Caco-2 (cell line): ENCODE measurements at regions of chr1 and their contacts with region 1.

Region 1: DNA sequence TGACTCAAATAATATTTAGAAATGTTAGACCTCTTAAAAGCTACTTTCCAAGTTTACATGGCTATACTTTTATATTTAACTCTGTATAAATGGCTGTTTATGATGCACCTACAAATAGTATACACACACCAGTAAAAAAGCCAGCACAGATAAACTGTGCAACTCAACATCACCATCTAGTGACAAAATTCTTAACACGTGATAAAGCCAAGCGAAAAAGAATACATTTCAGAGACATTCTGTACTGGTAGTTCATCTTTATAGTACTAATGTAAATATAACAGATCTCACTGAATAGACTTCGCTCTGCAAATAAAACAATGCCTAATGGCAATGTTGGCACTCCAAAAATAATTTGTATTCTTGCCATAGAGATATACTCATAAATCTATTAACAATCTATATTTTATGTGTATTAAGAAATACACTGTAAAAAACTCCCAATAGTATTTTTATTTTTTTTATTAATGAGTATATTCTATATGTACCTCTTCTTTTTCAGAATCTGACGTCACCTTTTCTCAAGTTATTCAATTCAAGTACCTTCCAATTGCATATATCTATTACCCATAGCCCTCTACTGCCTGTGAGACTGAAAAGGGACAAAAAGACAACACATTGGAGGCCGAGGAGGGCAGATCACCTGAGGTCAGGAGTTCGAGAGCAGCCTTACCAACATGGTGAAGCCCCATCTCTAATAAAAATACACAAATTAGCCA is 100.2 kb downstream of the DPYD start:
- DNase-seq: peak in 1 of 2 experiments; percentile 30
- H3K4me3 ChIP-seq: no peak overlapping the region
- H3K4me3 Mint-ChIP-seq: no peak overlapping the region
- H3K27ac Mint-ChIP-seq: no peak overlapping the region
- H3K4me1 ChIP-seq: peaks cover 20% of the 10 kb centered on the region
- H3K4me1 Mint-ChIP-seq: peaks cover 2% of the 10 kb centered on the region
- H3K27me3 ChIP-seq: no peaks in the 10 kb centered on the region
- H3K27me3 Mint-ChIP-seq: no peaks in the 10 kb centered on the region
- CTCF ChIP-seq: peak in 1 of 2 experiments; percentile 28

Region 2: GRCh38 chr1:97186404-97186803 is 634.2 kb before region 1 on chr1:
- CTCF ChIA-PET with region 1: no interaction called
- POLR2A ChIA-PET with region 1: no interaction called
- intact Hi-C with region 1: loop called (anchors 2 kb)
- DNase-seq: peak in 1 of 2 experiments; percentile 2
- H3K4me3 ChIP-seq: no peak overlapping the region
- H3K4me3 Mint-ChIP-seq: no peak overlapping the region
- H3K27ac Mint-ChIP-seq: no peak overlapping the region
- H3K4me1 ChIP-seq: no peaks in the 10 kb centered on the region
- H3K4me1 Mint-ChIP-seq: no peaks in the 10 kb centered on the region
- H3K27me3 ChIP-seq: no peaks in the 10 kb centered on the region
- H3K27me3 Mint-ChIP-seq: no peaks in the 10 kb centered on the region
- CTCF ChIP-seq: no peak

Region 3: GRCh38 chr1:97243973-97244560 is 576.6 kb before region 1 on chr1:
- CTCF ChIA-PET with region 1: no interaction called
- POLR2A ChIA-PET with region 1: no interaction called
- intact Hi-C with region 1: loop called (anchors 10 kb)
- DNase-seq: no peak
- H3K4me3 ChIP-seq: no peak overlapping the region
- H3K4me3 Mint-ChIP-seq: no peak overlapping the region
- H3K27ac Mint-ChIP-seq: no peak overlapping the region
- H3K4me1 ChIP-seq: no peaks in the 10 kb centered on the region
- H3K4me1 Mint-ChIP-seq: no peaks in the 10 kb centered on the region
- H3K27me3 ChIP-seq: no peaks in the 10 kb centered on the region
- H3K27me3 Mint-ChIP-seq: no peaks in the 10 kb centered on the region
- CTCF ChIP-seq: peak; percentile 10 to 13

Region 4: GRCh38 chr1:97668945-97669344 is 151.7 kb before region 1 on chr1:
- CTCF ChIA-PET with region 1: no interaction called
- POLR2A ChIA-PET with region 1: no interaction called
- intact Hi-C with region 1: loop called (anchors 1 kb)
- DNase-seq: peak; percentile 8 to 30
- H3K4me3 ChIP-seq: no peak overlapping the region
- H3K4me3 Mint-ChIP-seq: no peak overlapping the region
- H3K27ac Mint-ChIP-seq: no peak overlapping the region
- H3K4me1 ChIP-seq: no peaks in the 10 kb centered on the region
- H3K4me1 Mint-ChIP-seq: no peaks in the 10 kb centered on the region
- H3K27me3 ChIP-seq: no peaks in the 10 kb centered on the region
- H3K27me3 Mint-ChIP-seq: no peaks in the 10 kb centered on the region
- CTCF ChIP-seq: peak in 1 of 2 experiments; percentile 14

Region 5: DNA sequence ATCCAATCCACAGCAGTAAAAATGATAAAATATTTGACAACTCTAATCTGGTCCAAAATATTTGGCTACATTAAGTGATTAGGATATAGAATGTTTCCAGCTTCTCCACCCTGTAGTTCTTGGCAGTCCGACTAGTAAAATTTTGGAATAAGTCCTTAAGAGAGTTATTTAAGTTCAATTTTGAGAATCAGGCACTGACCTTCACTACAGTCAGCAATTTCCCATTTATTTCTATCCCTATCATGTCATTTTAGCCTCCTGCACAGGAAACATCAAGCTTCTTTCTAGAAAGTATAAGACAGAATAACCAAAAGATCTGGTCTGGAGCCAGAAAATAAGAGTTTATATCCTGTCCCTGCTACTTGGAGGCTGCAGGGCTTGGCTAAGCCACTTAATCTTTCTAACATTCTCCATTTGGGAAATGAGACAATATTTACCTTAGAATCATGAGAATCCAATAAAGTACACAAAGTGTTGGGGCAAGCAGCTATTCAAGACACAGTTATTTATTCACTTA is 62.0 kb before region 1 on chr1:
- CTCF ChIA-PET with region 1: no interaction called
- POLR2A ChIA-PET with region 1: no interaction called
- intact Hi-C with region 1: no loop called
- DNase-seq: no peak
- H3K4me3 ChIP-seq: no peak overlapping the region
- H3K4me3 Mint-ChIP-seq: no peak overlapping the region
- H3K27ac Mint-ChIP-seq: no peak overlapping the region
- H3K4me1 ChIP-seq: no peaks in the 10 kb centered on the region
- H3K4me1 Mint-ChIP-seq: no peaks in the 10 kb centered on the region
- H3K27me3 ChIP-seq: no peaks in the 10 kb centered on the region
- H3K27me3 Mint-ChIP-seq: no peaks in the 10 kb centered on the region
- CTCF ChIP-seq: no peak

Region 6: GRCh38 chr1:98468111-98468717 is 647.6 kb after region 1 on chr1:
- CTCF ChIA-PET with region 1: no interaction called
- POLR2A ChIA-PET with region 1: no interaction called
- intact Hi-C with region 1: loop called (anchors 5 kb)
- DNase-seq: peak in 1 of 2 experiments; percentile 30
- H3K4me3 ChIP-seq: no peak overlapping the region
- H3K4me3 Mint-ChIP-seq: peak overlapping the region; percentile 41
- H3K27ac Mint-ChIP-seq: no peak overlapping the region
- H3K4me1 ChIP-seq: no peaks in the 10 kb centered on the region
- H3K4me1 Mint-ChIP-seq: peaks cover 21% of the 10 kb centered on the region
- H3K27me3 ChIP-seq: no peaks in the 10 kb centered on the region
- H3K27me3 Mint-ChIP-seq: no peaks in the 10 kb centered on the region
- CTCF ChIP-seq: peak; percentile 63 to 75